IMR-90 (cell line): ENCODE measurements at regions of chr1 and their contacts with region 1.

Region 1: DNA sequence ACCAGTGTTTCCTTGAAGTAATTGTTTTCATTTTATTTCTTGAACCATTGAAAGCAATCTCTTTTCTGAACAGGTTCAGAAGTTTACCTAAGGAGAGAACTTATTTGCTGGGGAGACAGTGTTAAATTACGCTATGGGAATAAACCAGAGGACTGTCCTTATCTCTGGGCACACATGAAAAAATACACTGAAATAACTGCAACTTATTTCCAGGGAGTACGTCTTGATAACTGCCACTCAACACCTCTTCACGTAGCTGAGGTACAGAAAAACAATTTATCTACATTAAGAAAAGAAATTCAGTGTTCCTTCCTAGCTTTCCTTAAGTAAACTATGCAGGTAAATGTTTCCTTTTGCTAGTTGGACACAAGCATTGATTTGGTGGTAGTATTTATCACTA is 27.4 kb downstream of the AGL start:
- DNase-seq: no peak
- ATAC-seq: no peak
- H3K4me3 ChIP-seq: no peak overlapping the region
- H3K27ac ChIP-seq: no peak overlapping the region
- H3K4me1 ChIP-seq: no peaks in the 10 kb centered on the region
- H3K27me3 ChIP-seq: no peaks in the 10 kb centered on the region
- CTCF ChIP-seq: no peak
- POLR2A ChIP-seq: no peak
- RAD21 ChIP-seq: no peak

Region 2: GRCh38 chr1:99906535-99906934 is 29.0 kb after region 1 on chr1:
- CTCF ChIA-PET with region 1: no interaction called
- POLR2A ChIA-PET with region 1: no interaction called
- dilution Hi-C with region 1: no loop called
- in situ Hi-C with region 1: no loop called
- intact Hi-C with region 1: loop called (anchors 1 kb)
- DNase-seq: no peak
- ATAC-seq: no peak
- H3K4me3 ChIP-seq: no peak overlapping the region
- H3K27ac ChIP-seq: no peak overlapping the region
- H3K4me1 ChIP-seq: no peaks in the 10 kb centered on the region
- H3K27me3 ChIP-seq: no peaks in the 10 kb centered on the region
- CTCF ChIP-seq: no peak
- POLR2A ChIP-seq: no peak
- RAD21 ChIP-seq: no peak